ENCODE measurements at regions of chr17 and their contacts with region 1.

Region 1: GRCh38 chr17:59572301-59572928 is 7.0 kb downstream of the DHX40 start:
- DNase-seq: no peak
- ATAC-seq: no peak
- H3K4me3 ChIP-seq: no peak overlapping the region
- H3K27ac ChIP-seq: no peak overlapping the region
- H3K4me1 ChIP-seq: no peaks in the 10 kb centered on the region
- H3K27me3 ChIP-seq: no peaks in the 10 kb centered on the region
- CTCF ChIP-seq: no peak

Region 2: DNA sequence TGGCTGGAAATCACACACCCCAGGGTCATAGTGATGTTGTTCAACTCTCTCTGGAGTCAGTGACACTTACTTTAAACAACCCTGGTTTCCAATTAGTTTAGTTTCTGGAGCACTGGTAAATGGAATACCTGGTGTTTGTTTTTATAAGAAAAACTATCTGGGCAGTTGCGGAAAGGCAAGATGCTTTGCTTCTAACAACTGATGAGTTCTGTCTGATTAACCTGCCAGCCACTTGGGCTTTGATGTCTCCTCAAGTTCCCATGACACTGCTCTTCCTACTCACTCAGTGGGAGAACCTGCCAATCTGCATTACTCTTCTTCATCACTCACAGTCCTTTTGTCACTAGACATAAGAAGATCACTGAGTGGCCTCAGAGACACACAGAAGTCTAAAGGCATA is 979.3 kb before region 1 on chr17:
- intact Hi-C with region 1: loop called in 1 of 10 experiments (anchors 5 kb)
- DNase-seq: no peak
- ATAC-seq: no peak
- H3K4me3 ChIP-seq: no peak overlapping the region
- H3K27ac ChIP-seq: no peak overlapping the region
- H3K4me1 ChIP-seq: no peaks in the 10 kb centered on the region
- H3K27me3 ChIP-seq: no peaks in the 10 kb centered on the region
- CTCF ChIP-seq: no peak

Region 3: DNA sequence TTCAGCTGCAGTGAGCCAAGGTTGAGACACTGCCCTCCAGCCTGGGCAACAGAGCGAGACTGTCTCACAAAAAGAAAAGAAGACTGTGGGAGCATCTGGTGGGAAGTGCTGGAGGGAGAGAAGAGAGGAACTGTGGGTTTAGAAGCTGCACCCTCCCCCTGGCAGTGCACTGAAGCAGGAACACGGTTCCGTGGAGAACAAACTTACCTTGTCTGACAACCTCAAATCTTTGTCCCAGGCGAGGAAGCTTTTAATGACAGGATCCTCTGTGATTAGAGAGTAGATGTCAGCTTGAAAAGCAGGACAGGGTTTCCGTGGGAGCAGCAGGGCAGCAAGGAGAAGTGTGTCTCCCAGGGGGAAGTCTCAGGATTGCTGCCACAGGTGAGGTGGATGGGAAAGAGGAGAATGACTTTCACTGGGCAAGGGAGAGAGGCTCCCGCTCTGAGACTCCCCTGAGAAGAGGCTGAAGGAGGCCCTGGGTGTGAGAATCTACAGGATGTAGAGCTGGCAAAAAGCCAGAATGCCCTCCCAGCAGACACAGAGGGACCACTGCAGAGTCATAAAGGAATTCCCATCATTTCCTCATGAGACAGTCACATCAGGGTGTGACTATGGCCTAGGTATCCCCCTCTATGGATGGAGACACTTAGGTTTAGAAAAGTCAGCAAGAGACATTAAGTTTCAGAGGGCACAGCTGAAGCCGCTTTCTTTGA is 394.0 kb before region 1 on chr17:
- intact Hi-C with region 1: no loop called
- DNase-seq: no peak
- ATAC-seq: no peak
- H3K4me3 ChIP-seq: no peak overlapping the region
- H3K27ac ChIP-seq: no peak overlapping the region
- H3K4me1 ChIP-seq: no peaks in the 10 kb centered on the region
- H3K27me3 ChIP-seq: no peaks in the 10 kb centered on the region
- CTCF ChIP-seq: no peak

Region 4: DNA sequence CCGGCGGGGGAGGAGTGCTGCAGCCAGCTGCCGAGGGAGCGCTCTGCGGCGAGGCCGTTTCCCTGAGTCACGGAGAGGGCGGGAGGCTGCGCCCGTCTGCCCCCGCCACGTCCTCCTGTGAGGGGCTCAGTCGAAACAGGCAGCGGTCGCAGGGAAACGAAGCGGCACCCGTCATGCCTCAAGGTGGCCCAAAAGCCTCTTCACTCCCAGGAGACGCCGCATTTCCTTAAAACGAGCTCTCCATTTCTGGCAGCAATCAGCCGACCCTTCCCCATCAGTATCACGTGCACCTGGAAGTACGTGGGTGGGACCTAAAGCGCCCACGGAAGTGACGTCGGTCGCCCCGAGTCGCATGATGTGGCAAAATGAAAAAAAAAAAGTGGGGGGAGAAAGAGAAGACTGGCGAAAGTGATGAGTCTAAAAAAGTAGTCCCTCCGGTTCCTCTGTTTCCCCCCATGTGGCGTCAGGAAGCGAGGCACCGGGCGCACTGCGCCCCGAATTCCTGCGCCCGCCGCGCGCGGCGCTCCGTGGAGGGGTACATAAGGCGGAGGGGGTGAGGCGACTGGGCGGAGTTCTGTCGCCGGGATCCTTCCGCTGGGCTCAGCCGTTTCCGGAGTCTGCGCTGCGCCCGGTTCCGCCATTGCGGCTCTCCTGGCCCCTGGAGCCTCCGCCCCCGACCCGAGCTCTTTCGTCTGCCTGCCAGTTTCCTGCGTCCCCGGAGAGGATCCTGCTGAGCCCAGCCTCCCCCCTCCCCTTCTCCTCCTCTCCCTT is 47.1 kb after region 1 on chr17 and contains the start of gene CLTC:
- intact Hi-C with region 1: no loop called
- DNase-seq: peak; percentile 90 to 93
- ATAC-seq: peak; percentile 93 to 96 (median 94)
- H3K4me3 ChIP-seq: peak within 1 kb of the TSS; percentile 74 to 94 (median 86)
- H3K27ac ChIP-seq: peak within 1 kb of the TSS; percentile 95 to 100 (median 98)
- H3K4me1 ChIP-seq: peaks cover 12 to 58% (median 45%) of the 10 kb centered on the region in 9 donors
- H3K27me3 ChIP-seq: no peaks in the 10 kb centered on the region
- CTCF ChIP-seq: peak in 1 of 9 donors; percentile 9
- total RNA-seq, gene CLTC: 138 to 196 (median 173) TPM

Region 5: DNA sequence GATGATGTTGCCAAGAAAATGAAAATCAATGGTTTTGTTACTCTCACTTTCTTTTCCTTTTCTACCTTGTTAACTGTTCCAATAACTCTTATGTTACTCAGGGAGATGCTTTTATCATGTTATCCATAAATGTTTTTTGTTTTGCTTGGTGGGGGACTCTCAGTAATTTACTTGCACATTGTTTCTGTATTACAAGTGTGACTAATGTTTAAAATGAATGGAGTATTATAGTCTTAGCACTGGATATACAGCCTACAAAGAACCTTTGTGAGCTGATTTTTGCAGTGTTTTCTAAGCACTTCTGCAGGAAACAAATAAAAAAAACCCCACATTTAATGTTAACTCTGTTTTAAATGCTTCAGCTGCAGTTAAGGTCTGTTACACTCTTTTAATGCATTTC is 147.1 kb after region 1 on chr17:
- intact Hi-C with region 1: no loop called
- DNase-seq: no peak
- ATAC-seq: no peak
- H3K4me3 ChIP-seq: no peak overlapping the region
- H3K27ac ChIP-seq: no peak overlapping the region
- H3K4me1 ChIP-seq: peaks cover 0 to 40% (median 4%) of the 10 kb centered on the region in 9 donors
- H3K27me3 ChIP-seq: no peaks in the 10 kb centered on the region
- CTCF ChIP-seq: no peak

Measured in heart right ventricle (tissue), 16 donors.